ENCODE measurements at regions of chr3 and their contacts with region 1.

Region 1: DNA sequence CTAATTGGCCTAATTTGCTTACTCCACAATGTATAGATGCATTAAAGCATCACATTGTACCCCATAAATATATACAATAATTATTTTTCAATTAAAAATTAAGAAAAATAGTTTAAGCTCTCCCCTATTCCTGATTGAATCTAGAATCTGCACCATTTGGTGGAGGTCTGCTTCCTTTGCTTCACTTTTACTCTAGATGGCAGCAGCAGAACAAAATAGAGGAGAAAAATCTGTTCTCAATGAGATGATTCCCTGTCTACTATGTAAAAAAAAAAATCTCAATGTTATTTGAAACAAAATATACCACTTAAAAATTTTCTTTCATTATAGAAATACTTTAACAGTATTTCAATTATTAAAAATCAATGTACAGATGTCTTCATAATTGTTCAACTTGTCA is 109.6 kb upstream of the FXR1 start:
- DNase-seq: no peak
- H3K4me3 ChIP-seq: no peak overlapping the region
- H3K27ac ChIP-seq: no peak overlapping the region
- H3K4me1 ChIP-seq: no peaks in the 10 kb centered on the region
- H3K27me3 ChIP-seq: no peaks in the 10 kb centered on the region
- CTCF ChIP-seq: peak in 4 of 11 experiments; percentile 22 to 38 (median 30)
- POLR2A ChIP-seq: no peak

Region 2: GRCh38 chr3:179299999-179300613 is 1502.7 kb before region 1 on chr3:
- intact Hi-C with region 1: no loop called
- DNase-seq: no peak
- H3K4me3 ChIP-seq: no peak overlapping the region
- H3K27ac ChIP-seq: no peak overlapping the region
- H3K4me1 ChIP-seq: no peaks in the 10 kb centered on the region
- H3K27me3 ChIP-seq: no peaks in the 10 kb centered on the region
- CTCF ChIP-seq: no peak
- POLR2A ChIP-seq: no peak

Region 3: DNA sequence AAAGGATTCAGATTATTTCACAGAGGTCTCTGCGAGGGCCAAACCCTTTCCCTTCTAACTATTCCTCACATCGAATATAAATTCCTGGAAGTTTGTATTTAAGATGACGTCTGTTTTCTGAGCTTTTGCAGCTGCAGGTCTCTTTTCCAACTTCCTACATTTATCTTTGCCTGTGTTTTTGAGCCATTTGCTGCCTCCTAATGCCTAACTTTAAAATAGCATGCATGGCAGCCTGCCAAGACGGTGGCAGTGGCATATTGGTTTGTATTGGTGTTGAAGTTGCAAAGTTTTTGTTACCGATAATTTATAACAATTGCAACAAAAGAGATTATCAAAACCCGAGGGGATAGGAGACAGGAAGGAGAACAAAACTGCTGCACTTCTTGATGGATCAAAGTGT is 373.8 kb after region 1 on chr3:
- intact Hi-C with region 1: loop called (anchors 10 kb)
- DNase-seq: no peak
- H3K4me3 ChIP-seq: no peak overlapping the region
- H3K27ac ChIP-seq: no peak overlapping the region
- H3K4me1 ChIP-seq: peaks cover 0 to 4% (median 0%) of the 10 kb centered on the region in 6 donors
- H3K27me3 ChIP-seq: no peaks in the 10 kb centered on the region
- CTCF ChIP-seq: peak in 10 of 11 experiments; percentile 19 to 56 (median 46)
- POLR2A ChIP-seq: no peak